Lower leg skin (tissue), 4 donors: ENCODE measurements at regions of chr3 and their contacts with region 1.

Region 1: DNA sequence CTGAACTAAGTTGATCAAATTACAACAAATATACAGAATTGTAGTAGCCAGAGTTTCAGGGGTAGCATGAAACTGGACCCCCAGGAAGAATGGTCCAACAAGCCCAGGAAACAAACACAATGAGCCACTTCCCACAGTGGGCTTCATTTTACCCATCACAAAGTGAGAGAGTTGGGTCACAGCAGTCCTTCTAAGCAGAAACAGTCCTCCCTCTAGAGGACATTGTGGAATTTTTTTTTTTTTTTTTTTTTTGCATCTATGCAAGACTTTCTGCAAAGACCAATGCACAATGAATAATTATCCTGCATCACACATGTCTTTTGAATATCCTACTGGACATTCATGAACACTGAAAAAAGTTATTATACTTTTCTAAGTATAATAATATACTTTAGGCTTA is 73.8 kb upstream of the ATP13A5 start:
- DNase-seq: no peak
- H3K4me3 ChIP-seq: no peak overlapping the region
- CTCF ChIP-seq: no peak
- POLR2A ChIP-seq: no peak

Region 2: DNA sequence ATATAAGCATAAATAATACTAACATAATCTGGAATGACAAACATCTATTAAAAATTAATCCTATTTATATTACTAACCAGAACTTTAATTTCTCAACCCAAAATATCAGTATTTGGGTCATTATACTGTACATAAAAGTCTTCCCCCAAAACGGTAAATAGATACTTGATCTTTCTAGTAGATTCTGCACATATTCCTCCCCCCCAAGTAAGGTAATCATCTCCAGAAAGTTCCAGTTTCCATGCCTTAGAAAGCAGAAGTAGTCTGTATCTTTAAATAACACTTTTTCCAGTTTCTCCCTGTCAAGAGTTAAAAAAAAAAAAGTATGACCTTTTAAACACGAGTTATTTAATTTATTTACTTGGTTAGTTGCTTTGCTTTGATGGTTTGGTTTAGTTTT is 384.0 kb before region 1 on chr3:
- intact Hi-C with region 1: no loop called
- DNase-seq: no peak
- H3K4me3 ChIP-seq: no peak overlapping the region
- CTCF ChIP-seq: no peak
- POLR2A ChIP-seq: no peak

Region 3: DNA sequence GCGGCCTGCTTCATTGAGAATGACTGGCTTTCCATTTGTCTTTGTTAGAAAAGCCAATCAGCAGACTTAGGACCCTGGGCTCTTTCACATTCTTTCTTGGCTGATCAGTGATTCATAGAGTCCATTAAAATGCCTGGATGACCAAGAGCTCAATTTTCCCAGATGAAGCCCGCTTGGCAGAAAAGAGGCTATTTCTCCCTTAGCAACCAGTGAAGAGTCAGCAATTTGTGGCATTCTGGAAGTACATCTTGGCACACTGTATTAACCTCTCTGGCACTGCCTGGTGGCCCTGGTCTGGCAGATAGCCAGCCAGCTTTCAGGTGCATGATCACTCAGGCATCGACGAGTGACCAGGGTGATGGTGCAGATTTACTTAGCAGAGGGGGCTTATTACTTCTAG is 357.0 kb before region 1 on chr3:
- intact Hi-C with region 1: no loop called
- DNase-seq: no peak
- H3K4me3 ChIP-seq: no peak overlapping the region
- CTCF ChIP-seq: no peak
- POLR2A ChIP-seq: no peak

Region 4: GRCh38 chr3:193372783-193373182 is 79.6 kb before region 1 on chr3:
- intact Hi-C with region 1: no loop called
- DNase-seq: no peak
- H3K4me3 ChIP-seq: no peak overlapping the region
- CTCF ChIP-seq: no peak
- POLR2A ChIP-seq: no peak

Region 5: GRCh38 chr3:193554811-193555210 is 102.5 kb after region 1 on chr3 and contains the start of gene ATP13A4:
- intact Hi-C with region 1: loop called (anchors 10 kb)
- DNase-seq: no peak
- H3K4me3 ChIP-seq: peak within 1 kb of the TSS; percentile 3
- CTCF ChIP-seq: no peak
- POLR2A ChIP-seq: no peak
- total RNA-seq, gene ATP13A4: 29.9 to 44.9 (median 41.5) TPM